ENCODE measurements at regions of chr2 and their contacts with region 1.

Region 1: DNA sequence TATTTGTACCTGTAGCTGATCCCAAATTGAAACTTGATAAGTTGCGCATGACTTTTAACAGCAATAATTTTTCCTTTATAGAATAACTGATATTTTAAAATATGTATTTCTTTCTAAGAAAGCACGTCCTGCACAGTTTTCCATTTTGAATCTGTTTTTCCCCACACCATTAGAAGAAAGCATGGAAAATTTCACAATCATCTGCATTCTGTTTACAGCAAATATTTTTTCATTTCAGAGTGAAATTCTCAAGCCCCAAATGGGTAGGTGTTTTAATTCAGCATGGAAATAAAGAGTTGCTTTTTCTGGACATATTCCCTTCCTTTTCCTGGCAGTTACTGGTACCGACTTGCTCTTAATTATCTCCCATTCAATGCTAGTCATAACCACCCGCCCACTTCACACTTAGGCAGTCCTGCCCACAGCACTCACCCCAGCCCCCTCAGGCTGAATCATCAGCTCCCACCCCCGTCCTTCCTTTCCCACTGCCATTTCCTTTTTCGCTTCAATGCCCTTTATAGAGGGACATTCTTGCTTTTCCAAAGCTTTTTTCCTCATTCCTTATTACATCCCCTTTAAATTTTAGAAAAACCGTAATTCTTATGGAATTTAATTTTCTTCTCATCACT is 89.2 kb upstream of the GLS start:
- DNase-seq: no peak
- H3K4me3 Mint-ChIP-seq: peak overlapping the region; percentile 15
- H3K27ac Mint-ChIP-seq: peak overlapping the region; percentile 75
- H3K4me1 Mint-ChIP-seq: peaks cover 65% of the 10 kb centered on the region
- H3K27me3 Mint-ChIP-seq: no peaks in the 10 kb centered on the region

Region 2: DNA sequence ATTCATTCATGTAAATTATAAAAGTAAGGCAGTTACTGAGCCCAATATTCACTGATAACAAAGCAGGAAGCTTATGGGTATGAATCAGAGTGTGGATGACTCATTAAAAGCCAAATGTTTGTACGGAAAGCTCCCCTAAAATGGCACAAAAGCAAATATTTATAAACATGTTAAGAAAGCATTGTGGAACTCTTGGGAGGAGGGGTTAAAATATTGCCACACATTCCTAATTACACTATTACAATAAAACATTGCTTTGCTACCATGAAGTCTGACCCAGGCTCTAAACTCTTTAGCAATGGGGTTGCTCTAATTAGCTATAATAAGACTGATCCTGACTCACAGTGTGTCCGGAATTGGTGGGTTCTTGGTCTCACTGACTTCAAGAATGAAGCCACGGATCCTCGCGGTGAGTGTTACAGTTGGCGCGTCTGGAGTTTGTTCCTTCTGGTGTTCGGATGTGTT is 31.7 kb before region 1 on chr2:
- intact Hi-C with region 1: loop called (anchors 2 kb)
- DNase-seq: no peak
- H3K4me3 Mint-ChIP-seq: no peak overlapping the region
- H3K27ac Mint-ChIP-seq: peak overlapping the region; percentile 38
- H3K4me1 Mint-ChIP-seq: peaks cover 51% of the 10 kb centered on the region
- H3K27me3 Mint-ChIP-seq: no peaks in the 10 kb centered on the region